Tibial artery (tissue), 4 donors: ENCODE measurements at regions of chr3 and their contacts with region 1.

Region 1: GRCh38 chr3:28637742-28638141 is 289.1 kb upstream of the AZI2 start:
- DNase-seq: no peak
- H3K4me3 ChIP-seq: no peak overlapping the region
- H3K27ac ChIP-seq: no peak overlapping the region
- H3K4me1 ChIP-seq: no peaks in the 10 kb centered on the region
- H3K27me3 ChIP-seq: no peaks in the 10 kb centered on the region
- CTCF ChIP-seq: no peak

Region 2: DNA sequence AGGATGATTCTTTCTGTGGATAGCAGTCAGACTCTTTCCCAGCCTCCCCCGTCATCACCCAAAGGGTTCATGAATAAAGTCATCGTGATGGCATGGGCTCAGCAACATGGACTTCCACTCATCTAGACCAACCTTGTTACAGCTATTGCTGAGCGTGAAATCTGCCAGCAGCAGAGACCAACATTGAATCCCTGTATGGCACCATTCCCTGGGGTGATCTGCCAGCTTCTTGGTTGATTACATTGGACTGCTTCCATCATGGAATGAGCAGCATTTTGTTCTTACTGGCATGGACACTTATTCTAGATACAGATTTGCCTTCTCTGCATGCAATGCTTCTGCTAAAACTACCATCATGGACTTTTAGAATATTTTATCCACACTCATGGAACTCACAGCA is 93.5 kb before region 1 on chr3:
- intact Hi-C with region 1: loop called (anchors 10 kb)
- DNase-seq: peak; percentile 23 to 78
- H3K4me3 ChIP-seq: no peak overlapping the region
- H3K27ac ChIP-seq: no peak overlapping the region
- H3K4me1 ChIP-seq: peaks cover 0 to 13% (median 2%) of the 10 kb centered on the region in 4 donors
- H3K27me3 ChIP-seq: no peaks in the 10 kb centered on the region
- CTCF ChIP-seq: no peak